ENCODE measurements at regions of chr11 and their contacts with region 1.

Region 1: GRCh38 chr11:59753650-59754493 is 1.3 kb upstream of the STX3 start:
- DNase-seq: peak; percentile 87 to 90
- H3K4me3 ChIP-seq: peak overlapping the region; percentile 72 to 86 (median 78)
- H3K27ac ChIP-seq: peak overlapping the region in 2 of 3 donors; percentile 94 to 96
- H3K4me1 ChIP-seq: peaks cover 14 to 15% of the 10 kb centered on the region in 2 donors
- H3K27me3 ChIP-seq: no peaks in the 10 kb centered on the region
- CTCF ChIP-seq: peak; percentile 78 to 94 (median 85)
- POLR2A ChIP-seq: peak in 1 of 2 donors; percentile 37

Region 2: GRCh38 chr11:59802639-59803176 is 48.8 kb after region 1 on chr11:
- intact Hi-C with region 1: loop called (anchors 5 kb)
- DNase-seq: no peak
- H3K4me3 ChIP-seq: no peak overlapping the region
- H3K27ac ChIP-seq: no peak overlapping the region
- H3K4me1 ChIP-seq: no peaks in the 10 kb centered on the region
- H3K27me3 ChIP-seq: no peaks in the 10 kb centered on the region
- CTCF ChIP-seq: peak in 5 of 6 experiments; percentile 43 to 83 (median 56)
- POLR2A ChIP-seq: no peak

Region 3: DNA sequence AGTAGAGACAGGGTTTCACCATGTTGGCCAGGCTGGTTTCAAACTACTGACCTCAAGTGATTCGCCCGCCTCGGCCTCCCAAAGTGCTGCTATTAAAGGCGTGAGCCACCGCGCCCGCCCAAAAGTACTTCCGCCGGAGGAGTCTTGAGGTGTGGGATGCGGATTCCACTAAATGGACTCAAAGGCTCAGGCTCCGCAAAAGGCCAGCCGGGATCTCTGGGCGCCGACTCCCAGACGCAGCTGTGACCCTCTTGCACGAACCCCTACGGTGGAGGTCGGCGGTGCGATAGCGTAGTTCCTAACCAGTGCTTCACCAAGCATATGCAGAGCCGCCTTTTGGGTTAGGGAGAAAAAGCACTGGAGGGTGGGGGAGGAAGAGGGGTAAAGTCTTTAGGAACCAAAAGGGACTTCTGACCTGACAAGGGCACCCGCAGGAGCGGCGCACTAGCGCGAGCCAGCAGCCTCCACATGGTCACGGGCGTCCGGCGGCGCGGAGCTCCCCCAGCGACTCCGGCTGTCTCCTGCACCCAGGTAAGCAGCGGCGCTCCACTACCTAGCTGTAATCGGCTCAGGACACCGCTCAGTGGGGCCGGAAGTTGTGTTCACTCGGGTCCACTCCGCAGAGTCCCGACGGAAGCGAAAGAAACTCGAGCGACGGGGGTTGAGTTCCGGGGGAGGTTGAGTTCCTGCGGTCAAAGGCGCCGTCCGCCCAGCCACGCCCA is 56.5 kb after region 1 on chr11 and contains the start of gene MRPL16:
- intact Hi-C with region 1: loop called (anchors 2 kb)
- DNase-seq: peak; percentile 90
- H3K4me3 ChIP-seq: peak within 1 kb of the TSS; percentile 67 to 95 (median 85)
- H3K27ac ChIP-seq: peak within 1 kb of the TSS; percentile 62 to 77 (median 69)
- H3K4me1 ChIP-seq: peaks cover 0 to 14% of the 10 kb centered on the region in 2 donors
- H3K27me3 ChIP-seq: no peaks in the 10 kb centered on the region
- CTCF ChIP-seq: peak in 4 of 6 experiments; percentile 31 to 37 (median 34)
- POLR2A ChIP-seq: peak; percentile 18 to 73
- total RNA-seq, gene MRPL16: 19.4 to 40.7 (median 25.4) TPM